ENCODE measurements at regions of chrX and their contacts with region 1.

Region 1: GRCh38 chrX:150772150-150772970 is 79.2 kb downstream of the MTMR1 start:
- DNase-seq: peak; percentile 83 to 93
- ATAC-seq: peak; percentile 68
- H3K4me3 ChIP-seq: no peak overlapping the region
- H3K27ac ChIP-seq: no peak overlapping the region
- H3K4me1 ChIP-seq: no peaks in the 10 kb centered on the region
- H3K27me3 ChIP-seq: no peaks in the 10 kb centered on the region

Region 2: DNA sequence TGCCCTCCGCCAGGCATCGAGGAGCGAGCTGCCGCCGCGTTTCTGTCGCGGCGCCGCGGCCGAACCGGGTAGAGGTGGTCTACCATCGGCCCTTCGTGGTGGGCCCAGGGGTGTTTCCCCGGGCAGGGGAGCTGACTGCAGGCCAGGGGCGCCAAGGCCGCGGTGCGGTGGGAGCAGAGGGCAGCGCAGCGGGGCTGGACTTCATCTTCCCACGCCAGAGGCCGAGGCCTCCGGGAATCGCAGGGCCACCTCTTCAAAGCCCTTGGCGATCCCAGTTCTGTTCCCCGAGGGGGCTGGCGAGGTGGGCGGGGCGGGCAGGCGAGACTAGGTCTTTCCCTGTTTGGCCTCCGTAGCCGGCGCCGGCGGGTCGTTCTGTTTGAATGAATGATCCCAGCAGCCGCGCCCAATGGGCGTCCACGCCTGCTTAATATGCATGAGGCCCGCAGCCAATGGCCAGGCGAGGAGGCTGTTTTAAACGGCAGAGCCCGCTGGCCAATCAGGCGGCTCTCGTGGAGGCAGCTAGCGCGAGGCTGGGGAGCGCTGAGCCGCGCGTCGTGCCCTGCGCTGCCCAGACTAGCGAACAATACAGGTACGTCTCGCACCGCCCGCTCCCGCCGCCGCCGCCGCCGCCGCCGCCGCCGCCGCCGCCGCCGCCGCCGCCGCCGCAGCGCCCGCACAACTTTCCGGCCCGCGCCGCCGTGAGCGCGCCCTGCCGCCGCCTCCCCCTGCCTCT is 210.6 kb after region 1 on chrX and contains the start of gene HMGB3:
- intact Hi-C with region 1: loop called in 1 of 2 experiments (anchors 10 kb)
- DNase-seq: peak; percentile 89 to 93
- ATAC-seq: peak; percentile 80
- H3K4me3 ChIP-seq: peak within 1 kb of the TSS; percentile 47 to 74
- H3K27ac ChIP-seq: no peak within 1 kb of the TSS
- H3K4me1 ChIP-seq: no peaks in the 10 kb centered on the region
- H3K27me3 ChIP-seq: no peaks in the 10 kb centered on the region
- total RNA-seq, gene HMGB3: 3.6 to 3.8 TPM

Region 3: GRCh38 chrX:151004082-151004481 is 231.7 kb after region 1 on chrX:
- intact Hi-C with region 1: loop called in 1 of 2 experiments (anchors 5 kb)
- DNase-seq: no peak
- ATAC-seq: no peak
- H3K4me3 ChIP-seq: no peak overlapping the region
- H3K27ac ChIP-seq: no peak overlapping the region
- H3K4me1 ChIP-seq: no peaks in the 10 kb centered on the region
- H3K27me3 ChIP-seq: no peaks in the 10 kb centered on the region

Region 4: DNA sequence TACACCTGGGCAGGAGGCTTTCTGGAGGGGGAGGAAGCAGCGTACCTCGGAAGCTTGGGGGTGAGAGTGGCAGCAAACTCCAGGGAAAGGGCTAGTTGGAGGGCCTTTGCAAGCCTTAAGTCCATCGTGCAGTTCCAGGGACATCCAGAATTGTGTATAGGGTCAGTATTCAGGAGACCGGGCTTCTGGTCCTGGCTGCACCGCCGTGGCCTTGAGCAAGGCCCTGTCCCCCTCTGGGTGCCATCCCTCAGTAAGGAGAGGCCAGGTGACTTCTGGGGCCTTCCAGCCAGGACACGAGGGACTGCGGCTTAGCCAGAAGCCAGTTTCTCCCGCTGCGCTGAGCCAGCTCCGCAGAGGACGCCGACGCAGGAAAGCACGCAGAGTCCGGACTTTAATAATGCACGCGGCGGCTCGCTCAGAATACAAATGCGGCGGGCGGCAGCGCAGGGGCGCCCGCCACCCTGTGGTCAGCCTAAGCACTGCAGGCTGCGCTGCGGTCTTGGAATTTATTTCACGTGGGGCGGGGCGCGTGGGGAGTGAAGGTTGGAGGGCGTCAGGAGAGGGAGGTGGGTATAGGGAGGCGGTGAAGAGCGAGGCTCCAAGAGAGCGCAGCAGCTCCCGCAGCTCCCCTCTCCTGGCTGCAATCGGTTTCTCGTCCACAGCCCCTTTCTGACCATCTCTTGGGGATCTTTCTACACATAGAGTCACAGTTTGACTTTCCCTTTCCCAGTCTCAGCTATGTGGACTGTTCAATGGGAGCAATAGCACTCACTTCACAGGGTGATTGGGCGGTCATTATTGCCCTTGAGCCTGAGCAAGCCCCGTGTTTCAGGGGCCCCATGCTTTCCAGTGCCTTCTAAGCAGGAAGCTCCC is 310.0 kb after region 1 on chrX:
- intact Hi-C with region 1: loop called (anchors 1 to 2 kb)
- DNase-seq: peak; percentile 70 to 88
- ATAC-seq: peak; percentile 89
- H3K4me3 ChIP-seq: no peak overlapping the region
- H3K27ac ChIP-seq: no peak overlapping the region
- H3K4me1 ChIP-seq: no peaks in the 10 kb centered on the region
- H3K27me3 ChIP-seq: no peaks in the 10 kb centered on the region

Measured in aorta (tissue), 5 donors.